Activated naive CD4-positive, alpha-beta T cell treated with anti-CD3 and anti-CD28 coated beads for 36 hours (primary cell): ENCODE measurements at regions of chr6 and their contacts with region 1.

Region 1: GRCh38 chr6:33271458-33272274 is at the starts of genes RPS18 and VPS52:
- DNase-seq: peak; percentile 95
- H3K4me3 Mint-ChIP-seq: peak within 1 kb of the TSS; percentile 99
- H3K27ac Mint-ChIP-seq: peak within 1 kb of the TSS; percentile 100
- H3K4me1 Mint-ChIP-seq: peaks cover 45% of the 10 kb centered on the region
- H3K27me3 Mint-ChIP-seq: no peaks in the 10 kb centered on the region
- total RNA-seq, gene RPS18: 5,497 to 5,551 TPM
- total RNA-seq, gene VPS52: 30.3 to 31.0 TPM

Region 2: DNA sequence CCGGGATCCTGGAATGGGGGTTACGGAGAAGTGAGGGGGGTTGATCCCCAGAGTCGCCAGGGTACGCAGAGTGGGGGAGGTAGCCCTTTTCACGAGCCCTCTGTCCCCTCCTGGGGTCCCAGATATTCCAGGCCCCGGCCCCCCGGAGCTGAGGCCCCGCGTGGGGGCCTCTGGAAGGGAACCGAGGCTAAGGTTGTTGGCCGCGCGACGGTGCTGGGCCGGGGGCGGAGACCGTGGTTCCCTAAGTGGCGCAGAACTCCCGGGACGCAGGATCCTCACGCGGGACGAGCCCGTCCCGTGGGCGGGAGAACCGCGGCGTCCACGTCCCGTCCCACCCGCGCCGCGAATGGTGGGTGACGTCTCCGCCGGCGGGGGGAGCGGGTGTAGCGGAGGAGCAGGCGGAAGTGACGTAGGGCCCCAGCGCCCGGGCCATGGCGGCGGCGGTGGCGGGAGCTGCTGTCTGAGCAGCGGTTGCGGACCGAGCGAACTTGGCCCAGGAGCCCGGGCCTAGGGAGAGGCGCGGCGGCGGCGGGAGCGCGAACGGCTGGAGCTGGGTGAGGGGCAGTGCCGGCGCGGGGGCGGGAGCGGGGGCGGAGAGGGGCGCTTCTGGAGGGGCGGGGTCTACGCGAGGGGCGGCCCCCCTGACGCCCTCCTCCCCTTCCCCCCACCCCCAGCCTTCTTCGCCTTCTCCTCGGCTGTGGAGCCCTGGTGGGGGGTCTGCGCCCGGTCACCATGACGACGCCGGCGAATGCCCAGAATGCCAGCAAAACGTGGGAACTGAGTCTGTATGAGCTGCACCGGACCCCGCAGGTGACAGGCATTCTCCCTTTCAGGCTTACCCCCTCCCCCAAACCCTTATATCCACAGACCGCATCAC is 63.3 kb before region 1 on chr6 and contains the start of gene RING1:
- CTCF ChIA-PET with region 1: no interaction called
- intact Hi-C with region 1: loop called (anchors 1 kb)
- DNase-seq: peak; percentile 87
- H3K4me3 Mint-ChIP-seq: peak within 1 kb of the TSS; percentile 90
- H3K27ac Mint-ChIP-seq: peak within 1 kb of the TSS; percentile 92
- H3K4me1 Mint-ChIP-seq: peaks cover 55% of the 10 kb centered on the region
- H3K27me3 Mint-ChIP-seq: peaks cover 8% of the 10 kb centered on the region
- total RNA-seq, gene RING1: 17.1 to 18.2 TPM

Region 3: DNA sequence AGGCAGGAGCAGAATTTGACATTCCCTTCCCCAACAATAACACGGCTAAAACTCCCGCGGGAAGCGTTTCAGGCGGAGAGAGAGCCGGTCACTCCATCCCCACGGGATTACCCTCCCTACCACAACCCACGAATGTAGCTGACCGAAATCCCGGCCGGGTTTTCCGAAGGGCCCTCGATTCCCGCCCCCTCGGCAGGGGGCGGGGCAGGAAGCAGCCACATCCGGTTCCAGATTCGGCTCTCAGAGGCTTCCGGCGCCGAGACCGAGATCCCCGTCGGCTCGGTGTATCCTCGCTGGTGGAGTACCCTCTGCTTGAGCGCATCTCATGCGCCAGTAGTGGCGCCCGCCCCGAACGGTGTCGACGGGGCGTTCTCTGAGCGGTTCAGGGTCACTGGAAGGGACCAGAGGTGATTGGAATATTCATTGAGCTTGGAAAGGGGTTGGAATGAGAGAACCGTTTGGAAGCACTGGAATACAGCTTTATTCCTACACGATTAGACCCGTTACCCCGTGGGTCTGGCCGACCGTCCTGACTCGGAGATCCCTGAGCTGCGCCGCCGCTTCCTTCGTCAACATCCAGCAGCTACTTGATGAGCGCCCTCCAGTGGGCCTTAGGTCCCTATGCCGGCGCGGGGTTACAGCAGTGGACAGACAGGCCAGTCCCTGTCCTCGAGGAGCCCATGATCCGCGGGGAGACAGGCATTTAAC is 27.7 kb after region 1 on chr6:
- CTCF ChIA-PET with region 1: interaction called, 4 read pairs
- intact Hi-C with region 1: loop called (anchors 1 kb)
- DNase-seq: peak; percentile 96
- H3K4me3 Mint-ChIP-seq: peak overlapping the region; percentile 85
- H3K27ac Mint-ChIP-seq: peak overlapping the region; percentile 98
- H3K4me1 Mint-ChIP-seq: peaks cover 29% of the 10 kb centered on the region
- H3K27me3 Mint-ChIP-seq: no peaks in the 10 kb centered on the region

Region 4: GRCh38 chr6:33323623-33323948 is 51.9 kb after region 1 on chr6:
- CTCF ChIA-PET with region 1: interaction called, 3 read pairs
- intact Hi-C with region 1: loop called (anchors 1 kb)
- DNase-seq: no peak
- H3K4me3 Mint-ChIP-seq: peak overlapping the region; percentile 95
- H3K27ac Mint-ChIP-seq: peak overlapping the region; percentile 98
- H3K4me1 Mint-ChIP-seq: peaks cover 43% of the 10 kb centered on the region
- H3K27me3 Mint-ChIP-seq: no peaks in the 10 kb centered on the region

Region 5: DNA sequence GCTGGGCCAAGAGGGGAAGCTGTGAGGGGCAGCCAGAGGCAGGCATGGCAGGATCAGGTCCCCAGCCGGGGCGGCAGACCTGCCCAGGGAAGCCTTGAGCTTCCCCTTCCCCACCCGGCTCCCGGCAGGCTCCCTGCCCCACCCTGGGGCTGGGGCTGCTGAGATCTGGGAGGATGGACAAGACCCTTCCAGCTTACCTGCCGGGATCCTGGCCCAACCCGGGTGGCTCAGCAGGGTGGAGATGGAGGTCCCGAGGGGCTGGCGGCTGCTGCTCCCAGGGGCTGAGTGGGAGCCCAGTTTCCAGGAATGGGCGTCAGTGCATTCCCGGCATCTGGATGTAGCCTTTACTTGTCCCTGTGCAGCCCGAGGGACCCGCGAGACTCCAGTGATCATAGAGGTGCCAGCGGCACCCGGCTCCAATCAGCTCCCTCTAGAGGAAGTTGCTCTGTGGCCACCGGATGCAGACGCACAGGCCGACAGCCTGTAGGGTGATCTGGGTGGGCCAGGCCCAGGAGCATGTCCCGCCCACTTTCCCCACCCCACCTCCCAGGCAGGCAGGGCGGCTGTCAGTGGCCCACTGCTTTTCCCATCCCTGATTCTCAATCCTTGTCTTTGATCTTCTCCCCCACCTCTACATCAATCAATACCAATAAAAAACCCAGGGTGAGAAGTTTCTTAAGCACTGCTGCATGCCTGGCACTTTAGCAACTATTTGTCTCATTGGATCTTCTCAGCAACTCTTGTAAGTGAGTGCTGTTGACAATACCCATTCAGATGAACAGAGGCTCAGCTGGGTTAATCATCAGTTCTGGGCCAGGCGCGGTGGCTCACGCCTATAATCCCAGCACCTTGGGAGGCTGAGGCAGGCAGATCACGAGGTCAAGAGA is 308.4 kb after region 1 on chr6 and contains the start of gene BAK1:
- CTCF ChIA-PET with region 1: no interaction called
- intact Hi-C with region 1: loop called (anchors 10 kb)
- DNase-seq: peak; percentile 92
- H3K4me3 Mint-ChIP-seq: peak within 1 kb of the TSS; percentile 86
- H3K27ac Mint-ChIP-seq: peak within 1 kb of the TSS; percentile 96
- H3K4me1 Mint-ChIP-seq: peaks cover 35% of the 10 kb centered on the region
- H3K27me3 Mint-ChIP-seq: no peaks in the 10 kb centered on the region
- total RNA-seq, gene BAK1: 38.3 to 41.1 TPM

Region 6: GRCh38 chr6:34115403-34115795 is 843.7 kb after region 1 on chr6:
- CTCF ChIA-PET with region 1: no interaction called
- intact Hi-C with region 1: no loop called
- DNase-seq: peak; percentile 27
- H3K4me3 Mint-ChIP-seq: no peak overlapping the region
- H3K27ac Mint-ChIP-seq: no peak overlapping the region
- H3K4me1 Mint-ChIP-seq: no peaks in the 10 kb centered on the region
- H3K27me3 Mint-ChIP-seq: peaks cover 17% of the 10 kb centered on the region